ENCODE measurements at regions of chr11 and their contacts with region 1.

Region 1: DNA sequence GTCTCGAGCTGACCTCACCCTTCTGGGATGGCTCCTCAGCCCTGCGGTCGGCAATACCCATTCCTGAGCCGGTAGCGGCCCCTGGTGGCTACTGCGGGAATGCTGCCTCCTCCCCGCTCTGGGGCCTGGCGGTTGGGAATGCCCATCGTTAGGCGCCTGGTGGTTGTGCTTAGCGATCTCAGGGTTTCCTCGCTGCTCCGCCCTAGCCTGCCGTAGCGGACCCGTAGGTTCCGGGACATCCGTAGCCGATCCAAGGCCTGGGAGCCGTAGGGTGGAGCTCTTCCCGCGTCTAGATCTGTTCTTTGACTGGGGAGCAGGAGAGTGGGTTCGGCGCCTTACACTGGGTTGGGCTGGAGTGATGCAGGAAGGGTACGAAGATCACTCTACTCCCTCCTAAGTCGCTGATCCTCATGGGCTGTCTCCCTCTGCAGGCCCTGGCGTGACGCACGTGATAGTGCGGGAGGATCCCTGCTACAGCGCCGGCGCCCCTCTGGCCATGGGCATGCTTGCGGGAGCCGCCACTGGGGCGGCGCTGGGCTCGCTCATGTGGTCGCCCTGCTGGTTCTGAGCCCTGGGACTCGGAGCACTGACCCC is 14.8 kb downstream of the PLEKHB1 start:
- DNase-seq: peak; percentile 85
- ATAC-seq: peak; percentile 99
- H3K4me3 Mint-ChIP-seq: peak overlapping the region; percentile 67
- H3K27ac Mint-ChIP-seq: no peak overlapping the region
- H3K4me1 Mint-ChIP-seq: peaks cover 3% of the 10 kb centered on the region
- H3K27me3 Mint-ChIP-seq: no peaks in the 10 kb centered on the region
- CTCF ChIP-seq: peak; percentile 89

Region 2: DNA sequence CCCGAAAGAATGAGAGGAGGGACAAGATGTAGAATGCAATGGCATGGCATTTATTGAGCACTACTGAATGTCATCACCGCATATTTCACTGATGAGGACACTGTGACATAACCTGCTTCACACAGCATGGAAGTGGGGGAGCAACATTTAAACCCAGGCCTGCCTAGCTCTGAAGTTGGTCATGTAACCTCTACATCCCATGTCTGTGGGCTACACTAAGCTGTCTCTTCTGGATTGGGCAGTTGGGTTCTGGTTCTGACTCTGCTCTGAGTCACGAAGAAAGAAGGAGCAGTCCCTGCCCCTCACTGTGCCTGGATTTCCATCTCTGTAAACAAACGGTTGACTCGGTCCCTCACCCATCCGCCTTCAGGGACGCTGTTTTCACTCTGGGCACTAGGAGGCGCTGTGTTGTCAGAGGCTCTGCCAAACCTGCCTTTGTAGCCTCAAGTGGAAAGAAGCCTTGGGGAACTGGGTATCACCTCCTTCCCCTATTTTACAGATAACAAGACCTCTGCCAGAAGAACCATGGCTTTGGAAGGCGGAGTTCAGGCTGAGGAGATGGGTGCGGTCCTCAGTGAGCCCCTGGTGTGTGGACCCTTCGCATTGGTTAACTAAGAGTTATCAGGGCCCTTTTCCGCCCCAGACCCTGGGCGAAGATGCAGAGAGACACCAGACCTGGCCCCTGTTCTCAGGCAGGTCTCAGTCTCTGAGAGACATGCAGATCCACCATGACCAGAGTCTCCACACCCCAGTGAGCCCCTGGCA is 365.7 kb before region 1 on chr11:
- CTCF ChIA-PET with region 1: interaction called, 8 read pairs
- POLR2A ChIA-PET with region 1: no interaction called
- intact Hi-C with region 1: loop called (anchors 1 kb)
- DNase-seq: peak; percentile 68
- ATAC-seq: peak; percentile 91
- H3K4me3 Mint-ChIP-seq: no peak overlapping the region
- H3K27ac Mint-ChIP-seq: no peak overlapping the region
- H3K4me1 Mint-ChIP-seq: peaks cover 6% of the 10 kb centered on the region
- H3K27me3 Mint-ChIP-seq: peaks cover 10% of the 10 kb centered on the region
- CTCF ChIP-seq: peak; percentile 85

Region 3: DNA sequence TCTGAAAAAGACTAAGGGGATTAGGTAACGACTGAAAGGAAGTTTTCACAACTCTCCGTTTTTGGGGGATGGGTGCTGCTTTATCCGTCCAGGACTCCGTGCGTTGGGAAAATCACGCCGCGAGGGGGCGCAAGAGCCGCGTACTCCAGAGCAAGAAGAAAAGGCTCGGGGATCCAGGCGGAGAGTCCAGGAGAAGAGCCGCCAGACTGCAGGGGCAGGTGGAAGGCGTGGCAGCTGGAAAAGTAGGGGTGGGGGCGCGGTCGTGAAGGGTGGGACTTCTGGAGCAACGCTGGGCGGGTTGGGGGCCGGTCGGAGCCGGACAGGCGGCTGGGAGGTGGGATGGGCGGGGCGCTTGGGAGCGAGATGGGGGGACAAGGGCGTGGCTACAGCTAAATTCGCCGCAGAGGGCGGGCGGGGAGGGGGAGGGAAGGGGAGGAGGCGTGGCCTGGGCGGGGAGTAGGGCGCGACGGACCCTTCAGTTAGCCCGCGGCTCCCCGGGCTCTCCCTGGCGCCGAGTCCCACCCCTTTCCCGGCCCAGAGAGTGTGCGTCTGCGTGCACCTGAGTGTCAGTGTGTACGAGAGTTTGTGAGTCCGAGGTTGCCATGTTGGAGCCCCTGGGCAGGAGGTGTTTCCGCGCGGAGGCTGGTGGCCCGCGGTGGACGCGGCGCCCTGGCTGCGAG is 353.7 kb before region 1 on chr11:
- CTCF ChIA-PET with region 1: interaction called, 9 read pairs
- POLR2A ChIA-PET with region 1: no interaction called
- intact Hi-C with region 1: loop called (anchors 1 kb)
- DNase-seq: peak; percentile 85
- ATAC-seq: peak; percentile 73
- H3K4me3 Mint-ChIP-seq: peak overlapping the region; percentile 93
- H3K27ac Mint-ChIP-seq: no peak overlapping the region
- H3K4me1 Mint-ChIP-seq: peaks cover 11% of the 10 kb centered on the region
- H3K27me3 Mint-ChIP-seq: peaks cover 8% of the 10 kb centered on the region
- CTCF ChIP-seq: no peak

Region 4: DNA sequence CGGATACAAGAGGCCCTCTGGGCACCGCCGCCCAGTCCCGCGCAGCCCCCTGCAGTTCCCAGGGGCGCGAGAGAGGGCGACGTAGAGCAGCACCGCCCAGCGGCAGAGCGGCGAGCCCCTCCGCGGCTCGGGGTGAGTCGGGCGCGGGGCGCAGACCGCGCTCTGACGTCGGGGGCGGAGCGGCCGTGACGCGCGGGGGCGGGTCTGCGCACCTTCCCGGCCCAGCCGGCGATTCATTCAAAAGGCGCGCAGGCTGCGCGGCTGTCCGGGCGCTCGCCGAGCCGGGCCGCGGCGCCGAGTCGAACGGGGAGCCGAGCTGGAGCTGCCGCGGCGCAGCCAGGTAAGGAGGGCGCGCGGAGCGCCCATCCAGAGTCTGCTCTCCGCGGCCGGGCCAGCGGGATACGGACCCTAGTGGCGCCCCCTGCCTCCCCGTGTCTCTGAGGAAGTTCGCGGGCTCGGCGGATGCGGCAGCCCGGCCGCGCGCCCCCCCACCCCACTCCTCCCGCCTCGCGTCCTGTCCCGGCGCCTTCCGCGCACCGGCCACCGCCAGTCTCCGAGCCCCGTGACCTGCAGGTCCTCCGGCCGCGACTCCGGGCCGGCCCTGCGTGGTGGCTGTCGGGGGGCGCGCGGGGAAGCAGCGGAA is 284.9 kb before region 1 on chr11 and contains the start of gene RELT:
- CTCF ChIA-PET with region 1: no interaction called
- POLR2A ChIA-PET with region 1: no interaction called
- intact Hi-C with region 1: loop called (anchors 1 kb)
- DNase-seq: peak; percentile 99
- ATAC-seq: peak; percentile 89
- H3K4me3 Mint-ChIP-seq: peak within 1 kb of the TSS; percentile 89
- H3K27ac Mint-ChIP-seq: peak within 1 kb of the TSS; percentile 89
- H3K4me1 Mint-ChIP-seq: peaks cover 73% of the 10 kb centered on the region
- H3K27me3 Mint-ChIP-seq: no peaks in the 10 kb centered on the region
- CTCF ChIP-seq: peak; percentile 63
- total RNA-seq, gene RELT: 81.8 and 90.1 TPM in 2 replicates

Region 5: GRCh38 chr11:73404048-73404447 is 257.1 kb before region 1 on chr11:
- CTCF ChIA-PET with region 1: interaction called, 9 read pairs
- POLR2A ChIA-PET with region 1: no interaction called
- intact Hi-C with region 1: loop called (anchors 1 kb)
- DNase-seq: no peak
- ATAC-seq: no peak
- H3K4me3 Mint-ChIP-seq: no peak overlapping the region
- H3K27ac Mint-ChIP-seq: no peak overlapping the region
- H3K4me1 Mint-ChIP-seq: peaks cover 4% of the 10 kb centered on the region
- H3K27me3 Mint-ChIP-seq: no peaks in the 10 kb centered on the region
- CTCF ChIP-seq: no peak

Region 6: GRCh38 chr11:73625696-73626318 is 35.3 kb before region 1 on chr11:
- CTCF ChIA-PET with region 1: interaction called, 112 read pairs
- POLR2A ChIA-PET with region 1: interaction called, 4 read pairs
- intact Hi-C with region 1: loop called (anchors 1 kb)
- DNase-seq: peak; percentile 34
- ATAC-seq: peak; percentile 93
- H3K4me3 Mint-ChIP-seq: no peak overlapping the region
- H3K27ac Mint-ChIP-seq: no peak overlapping the region
- H3K4me1 Mint-ChIP-seq: peaks cover 8% of the 10 kb centered on the region
- H3K27me3 Mint-ChIP-seq: peaks cover 9% of the 10 kb centered on the region
- CTCF ChIP-seq: peak; percentile 76

Region 7: GRCh38 chr11:73647459-73648100 is 13.6 kb before region 1 on chr11:
- CTCF ChIA-PET with region 1: interaction called, 5 read pairs
- POLR2A ChIA-PET with region 1: interaction called, 4 read pairs
- intact Hi-C with region 1: loop called (anchors 1 kb)
- DNase-seq: peak; percentile 84
- ATAC-seq: peak; percentile 100
- H3K4me3 Mint-ChIP-seq: peak overlapping the region; percentile 83
- H3K27ac Mint-ChIP-seq: peak overlapping the region; percentile 83
- H3K4me1 Mint-ChIP-seq: peaks cover 21% of the 10 kb centered on the region
- H3K27me3 Mint-ChIP-seq: no peaks in the 10 kb centered on the region
- CTCF ChIP-seq: no peak

Region 8: DNA sequence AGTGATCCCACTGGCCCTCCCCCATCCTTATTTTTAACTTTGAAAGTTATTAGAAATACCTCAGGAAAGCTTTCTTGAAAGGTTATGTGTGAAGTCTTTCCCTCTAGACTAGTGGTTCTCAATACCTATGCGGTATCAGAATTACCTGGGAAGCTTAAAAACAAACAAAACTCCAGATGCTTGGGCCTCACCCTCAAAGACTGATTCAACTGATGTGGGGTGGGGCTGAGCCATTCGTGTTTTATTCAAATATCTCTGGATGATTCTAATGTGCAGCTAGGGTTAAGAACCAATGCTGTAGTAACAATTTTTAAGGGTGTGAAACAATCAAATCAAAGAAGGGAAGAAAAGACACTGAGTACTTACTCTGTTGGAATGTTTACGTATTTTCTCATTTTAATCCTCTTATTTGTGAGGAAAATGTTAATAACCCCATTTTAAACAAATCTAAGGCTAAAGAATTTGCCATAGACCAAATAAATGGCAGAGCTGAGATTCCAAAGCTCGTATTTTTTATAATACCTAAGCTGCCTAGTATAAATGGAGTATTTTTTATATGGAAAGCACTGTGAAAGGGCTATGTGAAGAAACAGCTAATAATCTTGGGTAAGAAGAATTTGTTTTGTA is 32.9 kb after region 1 on chr11:
- CTCF ChIA-PET with region 1: no interaction called
- POLR2A ChIA-PET with region 1: no interaction called
- intact Hi-C with region 1: no loop called
- DNase-seq: no peak
- ATAC-seq: no peak
- H3K4me3 Mint-ChIP-seq: no peak overlapping the region
- H3K27ac Mint-ChIP-seq: no peak overlapping the region
- H3K4me1 Mint-ChIP-seq: no peaks in the 10 kb centered on the region
- H3K27me3 Mint-ChIP-seq: no peaks in the 10 kb centered on the region
- CTCF ChIP-seq: no peak